ENCODE measurements at regions of chr7 and their contacts with region 1.

Region 1: GRCh38 chr7:92528188-92528957 is at the starts of genes PEX1 and RBM48:
- DNase-seq: peak; percentile 90 to 99 (median 94)
- ATAC-seq: peak; percentile 89
- H3K4me3 ChIP-seq: peak within 1 kb of the TSS; percentile 94 to 95
- H3K4me3 Mint-ChIP-seq: peak within 1 kb of the TSS; percentile 91
- H3K27ac ChIP-seq: peak within 1 kb of the TSS; percentile 91 to 98
- H3K27ac Mint-ChIP-seq: peak within 1 kb of the TSS; percentile 98
- H3K4me1 ChIP-seq: peaks cover 22% of the 10 kb centered on the region
- H3K4me1 Mint-ChIP-seq: peaks cover 51% of the 10 kb centered on the region
- H3K27me3 ChIP-seq: no peaks in the 10 kb centered on the region
- H3K27me3 Mint-ChIP-seq: no peaks in the 10 kb centered on the region
- CTCF ChIP-seq: no peak
- total RNA-seq, gene PEX1: 17.8 to 18.1 TPM
- total RNA-seq, gene RBM48: 52.7 to 54.6 TPM

Region 2: GRCh38 chr7:91940572-91941341 is 587.6 kb before region 1 on chr7 and contains the start of gene AKAP9:
- CTCF ChIA-PET with region 1: no interaction called
- POLR2A ChIA-PET with region 1: interaction called, 4 read pairs
- intact Hi-C with region 1: loop called in 1 of 2 experiments (anchors 1 kb)
- DNase-seq: peak; percentile 71 to 93 (median 89)
- ATAC-seq: peak; percentile 84
- H3K4me3 ChIP-seq: peak within 1 kb of the TSS; percentile 78 to 92
- H3K4me3 Mint-ChIP-seq: peak within 1 kb of the TSS; percentile 93
- H3K27ac ChIP-seq: peak within 1 kb of the TSS; percentile 91 to 93
- H3K27ac Mint-ChIP-seq: peak within 1 kb of the TSS; percentile 96
- H3K4me1 ChIP-seq: peaks cover 21% of the 10 kb centered on the region
- H3K4me1 Mint-ChIP-seq: peaks cover 45% of the 10 kb centered on the region
- H3K27me3 ChIP-seq: no peaks in the 10 kb centered on the region
- H3K27me3 Mint-ChIP-seq: no peaks in the 10 kb centered on the region
- CTCF ChIP-seq: no peak
- total RNA-seq, gene AKAP9: 61.2 to 61.3 TPM

Region 3: GRCh38 chr7:92221756-92222155 is 306.6 kb before region 1 on chr7:
- CTCF ChIA-PET with region 1: no interaction called
- POLR2A ChIA-PET with region 1: no interaction called
- intact Hi-C with region 1: no loop called
- DNase-seq: no peak
- ATAC-seq: no peak
- H3K4me3 ChIP-seq: no peak overlapping the region
- H3K4me3 Mint-ChIP-seq: no peak overlapping the region
- H3K27ac ChIP-seq: no peak overlapping the region
- H3K27ac Mint-ChIP-seq: no peak overlapping the region
- H3K4me1 ChIP-seq: no peaks in the 10 kb centered on the region
- H3K4me1 Mint-ChIP-seq: no peaks in the 10 kb centered on the region
- H3K27me3 ChIP-seq: no peaks in the 10 kb centered on the region
- H3K27me3 Mint-ChIP-seq: no peaks in the 10 kb centered on the region
- CTCF ChIP-seq: no peak

Region 4: DNA sequence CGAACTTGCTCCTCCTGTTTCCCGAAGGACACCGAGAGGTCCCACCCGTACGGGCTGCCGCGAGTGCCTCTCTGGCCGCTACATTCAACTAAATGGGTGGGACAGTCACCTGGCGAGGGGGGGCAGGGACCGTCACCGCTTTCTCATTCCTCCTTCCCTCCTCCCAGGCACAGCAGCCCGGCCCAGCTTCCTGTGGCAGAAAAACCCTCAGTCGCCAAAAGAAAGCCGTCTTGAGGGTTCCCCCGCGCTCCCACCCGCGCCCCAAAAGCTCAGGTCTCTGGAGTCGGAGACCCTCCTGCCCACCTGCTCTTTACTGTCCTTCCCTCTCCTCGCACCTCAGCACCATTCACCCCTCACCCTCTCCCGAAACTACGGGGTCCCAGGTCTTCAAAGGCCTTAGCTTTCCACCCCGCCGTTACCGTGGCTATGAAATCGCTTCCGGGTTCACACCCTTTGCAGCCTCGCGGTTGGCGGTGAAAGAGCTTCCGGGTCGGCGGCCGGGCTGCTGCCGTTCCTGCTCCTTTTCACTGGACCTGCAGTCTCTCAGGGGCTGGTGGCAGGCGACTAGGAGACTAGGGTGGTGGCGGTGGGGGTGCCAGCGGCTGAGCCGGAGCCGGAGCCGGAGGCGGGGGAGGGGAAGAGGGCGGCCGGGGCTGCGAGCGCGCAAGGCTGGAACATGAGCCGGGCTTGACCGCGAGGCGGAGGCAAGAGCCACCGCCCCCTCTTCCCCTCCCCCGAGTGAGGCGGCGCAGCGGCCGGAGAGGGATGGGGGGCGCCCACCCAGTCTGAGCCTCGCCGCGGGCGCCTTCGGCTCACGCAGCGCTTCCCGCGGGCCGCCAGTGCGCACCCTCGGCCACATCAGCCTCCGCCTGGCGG is 282.6 kb before region 1 on chr7 and contains the starts of genes ANKIB1 and KRIT1:
- CTCF ChIA-PET with region 1: no interaction called
- POLR2A ChIA-PET with region 1: interaction called, 12 read pairs
- intact Hi-C with region 1: loop called (anchors 1 kb)
- DNase-seq: peak; percentile 65 to 93 (median 88)
- ATAC-seq: peak; percentile 74
- H3K4me3 ChIP-seq: peak within 1 kb of the TSS; percentile 86 to 90
- H3K4me3 Mint-ChIP-seq: peak within 1 kb of the TSS; percentile 98
- H3K27ac ChIP-seq: peak within 1 kb of the TSS; percentile 93 to 98
- H3K27ac Mint-ChIP-seq: peak within 1 kb of the TSS; percentile 99
- H3K4me1 ChIP-seq: peaks cover 29% of the 10 kb centered on the region
- H3K4me1 Mint-ChIP-seq: peaks cover 52% of the 10 kb centered on the region
- H3K27me3 ChIP-seq: no peaks in the 10 kb centered on the region
- H3K27me3 Mint-ChIP-seq: no peaks in the 10 kb centered on the region
- CTCF ChIP-seq: no peak
- total RNA-seq, gene ANKIB1: 51.1 to 59.6 TPM
- total RNA-seq, gene KRIT1: 25.0 to 27.0 TPM

Region 5: GRCh38 chr7:92590711-92591310 is 62.4 kb after region 1 on chr7:
- CTCF ChIA-PET with region 1: no interaction called
- POLR2A ChIA-PET with region 1: interaction called, 8 read pairs
- intact Hi-C with region 1: loop called (anchors 1 kb)
- DNase-seq: peak in 1 of 9 experiments; percentile 11
- ATAC-seq: no peak
- H3K4me3 ChIP-seq: peak overlapping the region; percentile 71 to 74
- H3K4me3 Mint-ChIP-seq: peak overlapping the region; percentile 96
- H3K27ac ChIP-seq: no peak overlapping the region
- H3K27ac Mint-ChIP-seq: no peak overlapping the region
- H3K4me1 ChIP-seq: peaks cover 32% of the 10 kb centered on the region
- H3K4me1 Mint-ChIP-seq: peaks cover 46% of the 10 kb centered on the region
- H3K27me3 ChIP-seq: no peaks in the 10 kb centered on the region
- H3K27me3 Mint-ChIP-seq: no peaks in the 10 kb centered on the region
- CTCF ChIP-seq: no peak

Region 6: DNA sequence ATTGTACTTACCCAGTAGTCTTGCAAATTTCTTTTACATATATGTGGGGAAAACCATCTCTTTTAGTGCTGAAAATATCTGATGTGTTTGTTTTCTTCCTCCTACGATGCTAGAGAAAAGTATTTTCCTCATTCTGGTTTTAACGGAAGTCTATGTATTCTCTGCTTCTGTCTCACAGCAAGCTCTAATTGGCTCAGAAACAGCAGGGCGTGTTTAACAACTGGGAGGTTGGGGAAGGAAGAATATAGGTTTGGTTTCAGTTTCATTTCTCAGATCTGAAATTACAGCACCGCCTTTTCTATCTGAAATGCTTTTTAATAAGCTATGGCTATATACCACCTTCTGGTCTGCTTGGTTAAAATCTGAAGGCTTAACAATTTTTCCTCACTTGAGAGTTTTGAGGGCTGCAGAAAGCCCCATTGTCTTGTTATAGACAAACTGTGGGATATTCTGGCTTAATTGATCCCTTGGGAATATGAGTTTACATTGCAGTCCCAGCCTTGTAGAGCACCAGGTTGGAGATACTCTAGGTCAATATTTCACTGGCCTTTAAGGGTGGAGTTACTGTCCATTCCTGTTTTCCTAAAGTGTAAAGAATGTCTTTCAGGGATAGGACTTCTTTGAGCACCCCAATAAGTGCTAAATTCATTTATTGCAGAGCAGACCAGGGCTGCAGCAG is 589.6 kb after region 1 on chr7 and contains the start of gene SAMD9:
- CTCF ChIA-PET with region 1: no interaction called
- POLR2A ChIA-PET with region 1: interaction called, 4 read pairs
- intact Hi-C with region 1: loop called (anchors 1 to 5 kb)
- DNase-seq: peak; percentile 18 to 91 (median 60)
- ATAC-seq: peak; percentile 99
- H3K4me3 ChIP-seq: peak within 1 kb of the TSS; percentile 61 to 64
- H3K4me3 Mint-ChIP-seq: peak within 1 kb of the TSS; percentile 80
- H3K27ac ChIP-seq: peak within 1 kb of the TSS; percentile 58 to 81
- H3K27ac Mint-ChIP-seq: peak within 1 kb of the TSS; percentile 84
- H3K4me1 ChIP-seq: peaks cover 28% of the 10 kb centered on the region
- H3K4me1 Mint-ChIP-seq: peaks cover 47% of the 10 kb centered on the region
- H3K27me3 ChIP-seq: no peaks in the 10 kb centered on the region
- H3K27me3 Mint-ChIP-seq: no peaks in the 10 kb centered on the region
- CTCF ChIP-seq: no peak
- total RNA-seq, gene SAMD9: 23.5 to 23.8 TPM